Esophagus squamous epithelium (tissue), 5 donors: ENCODE measurements at regions of chr10 and their contacts with region 1.

Region 1: DNA sequence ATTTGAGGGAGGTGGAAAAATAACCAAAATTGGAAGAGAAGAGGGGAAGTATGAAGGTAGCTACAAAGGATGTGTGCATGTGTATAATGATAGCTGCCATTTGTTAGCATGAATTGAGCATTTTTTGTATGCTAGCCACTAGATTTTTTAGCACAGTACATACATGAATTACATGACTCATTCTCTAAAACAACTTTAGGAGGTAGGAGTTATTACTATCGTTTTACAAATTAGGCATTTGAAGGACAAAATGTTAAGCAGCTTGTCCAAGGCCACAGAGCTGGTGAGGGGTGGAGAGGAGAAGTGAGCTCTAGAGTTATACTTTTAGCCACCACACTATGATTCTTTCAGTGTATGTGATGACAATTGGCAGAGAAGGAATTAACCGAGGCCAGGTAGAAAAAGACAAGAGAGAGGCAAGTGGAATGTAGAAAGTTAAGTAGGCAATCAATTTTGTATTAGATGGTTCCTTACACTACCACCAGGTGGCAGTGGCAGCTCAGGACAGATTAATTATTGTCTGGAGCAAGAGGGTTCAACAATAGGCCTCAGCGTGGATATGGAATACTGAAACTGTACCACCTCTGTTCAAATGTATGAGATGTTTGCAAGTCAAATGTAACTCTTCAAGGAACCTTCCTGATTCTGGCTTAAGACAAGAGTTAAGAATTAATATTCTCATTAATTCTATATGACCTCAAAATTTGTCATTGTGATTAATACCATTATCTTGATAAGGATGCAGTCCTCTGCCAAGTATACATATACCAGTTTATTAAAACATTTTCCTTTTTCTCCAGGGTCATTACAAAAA is 128.0 kb downstream of the MBL2 start:
- DNase-seq: no peak
- H3K4me3 ChIP-seq: no peak overlapping the region
- H3K27ac ChIP-seq: no peak overlapping the region
- H3K4me1 ChIP-seq: no peaks in the 10 kb centered on the region
- H3K27me3 ChIP-seq: no peaks in the 10 kb centered on the region
- CTCF ChIP-seq: peak in 5 of 6 experiments; percentile 37 to 67 (median 56)
- POLR2A ChIP-seq: no peak

Region 2: GRCh38 chr10:52755297-52756062 is 110.9 kb after region 1 on chr10:
- intact Hi-C with region 1: no loop called
- DNase-seq: no peak
- H3K4me3 ChIP-seq: no peak overlapping the region
- H3K27ac ChIP-seq: no peak overlapping the region
- H3K4me1 ChIP-seq: no peaks in the 10 kb centered on the region
- H3K27me3 ChIP-seq: no peaks in the 10 kb centered on the region
- CTCF ChIP-seq: no peak
- POLR2A ChIP-seq: no peak

Region 3: GRCh38 chr10:52779541-52780390 is 135.2 kb after region 1 on chr10:
- intact Hi-C with region 1: loop called (anchors 10 kb)
- DNase-seq: no peak
- H3K4me3 ChIP-seq: no peak overlapping the region
- H3K27ac ChIP-seq: no peak overlapping the region
- H3K4me1 ChIP-seq: no peaks in the 10 kb centered on the region
- H3K27me3 ChIP-seq: peaks cover 0 to 16% (median 0%) of the 10 kb centered on the region in 4 donors
- CTCF ChIP-seq: peak; percentile 38 to 82 (median 64)
- POLR2A ChIP-seq: no peak